MCF 10A (cell line): ENCODE measurements at regions of chr18 and their contacts with region 1.

Region 1: DNA sequence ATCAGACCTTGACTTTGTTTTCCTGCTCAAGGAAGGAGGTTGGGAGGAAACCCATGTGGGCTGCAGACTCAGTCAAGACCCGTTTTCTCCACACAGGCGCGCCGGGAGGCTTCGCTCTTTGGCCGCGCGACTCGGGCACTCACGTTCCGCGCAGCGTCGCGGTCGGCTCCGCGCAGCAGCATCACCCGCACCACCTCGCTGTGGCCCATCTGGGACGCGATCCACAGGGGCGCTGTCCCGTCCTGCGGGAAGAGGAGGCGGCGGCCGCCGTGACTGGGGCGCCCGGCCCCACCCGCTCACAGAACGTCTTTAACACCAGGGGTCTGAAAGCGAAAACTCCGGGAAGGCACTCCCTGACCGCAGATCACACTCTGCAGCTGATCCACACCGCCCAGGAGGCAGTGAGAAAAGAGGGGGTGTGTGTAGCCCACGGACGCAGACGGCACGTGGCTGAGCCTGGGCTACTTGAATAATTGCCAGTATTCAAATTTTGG is 33.1 kb upstream of the NPC1 start:
- DNase-seq: no peak
- H3K4me3 Mint-ChIP-seq: no peak overlapping the region
- H3K27ac Mint-ChIP-seq: no peak overlapping the region
- H3K4me1 Mint-ChIP-seq: peaks cover 6% of the 10 kb centered on the region
- H3K27me3 Mint-ChIP-seq: peaks cover 12% of the 10 kb centered on the region
- CTCF ChIP-seq: no peak

Region 2: GRCh38 chr18:23605938-23606337 is 13.5 kb before region 1 on chr18:
- CTCF ChIA-PET with region 1: interaction called, 19 read pairs
- POLR2A ChIA-PET with region 1: interaction called, 3 read pairs
- intact Hi-C with region 1: no loop called
- DNase-seq: no peak
- H3K4me3 Mint-ChIP-seq: no peak overlapping the region
- H3K27ac Mint-ChIP-seq: no peak overlapping the region
- H3K4me1 Mint-ChIP-seq: no peaks in the 10 kb centered on the region
- H3K27me3 Mint-ChIP-seq: no peaks in the 10 kb centered on the region
- CTCF ChIP-seq: no peak

Region 3: GRCh38 chr18:23689031-23689615 is 69.7 kb after region 1 on chr18 and contains the start of gene LAMA3:
- CTCF ChIA-PET with region 1: interaction called, 6 read pairs
- POLR2A ChIA-PET with region 1: no interaction called
- intact Hi-C with region 1: loop called (anchors 1 kb)
- DNase-seq: peak; percentile 58
- H3K4me3 Mint-ChIP-seq: peak within 1 kb of the TSS; percentile 70
- H3K27ac Mint-ChIP-seq: no peak within 1 kb of the TSS
- H3K4me1 Mint-ChIP-seq: no peaks in the 10 kb centered on the region
- H3K27me3 Mint-ChIP-seq: no peaks in the 10 kb centered on the region
- CTCF ChIP-seq: peak; percentile 9
- total RNA-seq, gene LAMA3: 269 and 371 TPM in 2 replicates

Region 4: GRCh38 chr18:23812546-23813440 is 193.4 kb after region 1 on chr18:
- CTCF ChIA-PET with region 1: interaction called, 11 read pairs
- POLR2A ChIA-PET with region 1: interaction called, 4 read pairs
- intact Hi-C with region 1: loop called (anchors 1 kb)
- DNase-seq: peak; percentile 35
- H3K4me3 Mint-ChIP-seq: no peak overlapping the region
- H3K27ac Mint-ChIP-seq: no peak overlapping the region
- H3K4me1 Mint-ChIP-seq: no peaks in the 10 kb centered on the region
- H3K27me3 Mint-ChIP-seq: no peaks in the 10 kb centered on the region
- CTCF ChIP-seq: peak; percentile 59

Region 5: GRCh38 chr18:24118750-24119577 is 499.5 kb after region 1 on chr18:
- CTCF ChIA-PET with region 1: no interaction called
- POLR2A ChIA-PET with region 1: no interaction called
- intact Hi-C with region 1: loop called (anchors 5 kb)
- DNase-seq: peak; percentile 86
- H3K4me3 Mint-ChIP-seq: no peak overlapping the region
- H3K27ac Mint-ChIP-seq: no peak overlapping the region
- H3K4me1 Mint-ChIP-seq: peaks cover under 1% of the 10 kb centered on the region
- H3K27me3 Mint-ChIP-seq: no peaks in the 10 kb centered on the region
- CTCF ChIP-seq: peak; percentile 75